Caco-2 (cell line): ENCODE measurements at regions of chr9 and their contacts with region 1.

Region 1: DNA sequence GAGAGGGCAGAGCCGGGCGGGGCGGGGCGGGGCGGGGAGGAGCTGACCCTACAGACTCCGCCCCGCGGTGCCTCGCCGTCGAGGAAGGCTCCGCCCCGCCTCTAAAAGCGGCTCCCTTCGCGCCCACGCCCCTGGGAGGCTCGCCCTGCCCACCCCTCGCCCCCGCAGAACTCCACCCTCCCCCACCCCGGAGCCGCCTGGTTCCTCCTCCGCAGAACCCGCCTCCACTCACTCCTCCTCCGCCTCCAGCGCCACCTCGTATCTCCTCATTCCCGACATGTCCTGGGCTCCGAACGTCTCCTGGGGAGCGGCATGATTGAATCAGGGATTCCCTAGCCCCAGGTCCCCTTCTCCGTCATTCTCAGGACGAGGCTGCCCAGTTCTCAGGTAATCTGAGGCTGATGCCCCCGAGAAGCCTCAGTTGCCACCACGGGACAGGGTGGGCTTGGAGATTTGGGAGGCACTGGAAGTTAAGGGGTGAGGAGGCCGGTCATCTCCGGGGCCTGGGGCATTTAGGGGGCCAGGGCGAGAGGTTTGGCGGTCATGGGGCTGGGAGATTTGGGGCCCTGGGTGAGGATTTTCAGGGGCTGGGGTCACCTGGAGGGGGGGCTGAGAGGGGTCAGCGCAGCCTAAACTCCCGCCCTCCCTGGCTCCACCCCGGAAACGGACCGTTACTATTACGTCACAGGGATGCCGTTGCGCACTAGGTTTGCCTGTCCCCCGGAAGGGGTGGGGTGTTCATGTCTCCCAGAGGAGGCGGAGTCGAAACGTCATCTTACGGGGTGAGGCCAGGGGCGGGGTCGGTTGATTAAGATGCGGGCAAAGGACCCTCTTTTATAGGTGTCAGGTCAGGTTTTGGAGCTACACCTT is 3.2 kb upstream of the CCL27 start:
- DNase-seq: peak; percentile 83 to 89
- H3K4me3 ChIP-seq: peak overlapping the region; percentile 57
- H3K4me3 Mint-ChIP-seq: peak overlapping the region; percentile 81
- H3K27ac Mint-ChIP-seq: peak overlapping the region; percentile 61
- H3K4me1 ChIP-seq: peaks cover 15% of the 10 kb centered on the region
- H3K4me1 Mint-ChIP-seq: peaks cover 28% of the 10 kb centered on the region
- H3K27me3 ChIP-seq: no peaks in the 10 kb centered on the region
- H3K27me3 Mint-ChIP-seq: no peaks in the 10 kb centered on the region
- CTCF ChIP-seq: no peak

Region 2: DNA sequence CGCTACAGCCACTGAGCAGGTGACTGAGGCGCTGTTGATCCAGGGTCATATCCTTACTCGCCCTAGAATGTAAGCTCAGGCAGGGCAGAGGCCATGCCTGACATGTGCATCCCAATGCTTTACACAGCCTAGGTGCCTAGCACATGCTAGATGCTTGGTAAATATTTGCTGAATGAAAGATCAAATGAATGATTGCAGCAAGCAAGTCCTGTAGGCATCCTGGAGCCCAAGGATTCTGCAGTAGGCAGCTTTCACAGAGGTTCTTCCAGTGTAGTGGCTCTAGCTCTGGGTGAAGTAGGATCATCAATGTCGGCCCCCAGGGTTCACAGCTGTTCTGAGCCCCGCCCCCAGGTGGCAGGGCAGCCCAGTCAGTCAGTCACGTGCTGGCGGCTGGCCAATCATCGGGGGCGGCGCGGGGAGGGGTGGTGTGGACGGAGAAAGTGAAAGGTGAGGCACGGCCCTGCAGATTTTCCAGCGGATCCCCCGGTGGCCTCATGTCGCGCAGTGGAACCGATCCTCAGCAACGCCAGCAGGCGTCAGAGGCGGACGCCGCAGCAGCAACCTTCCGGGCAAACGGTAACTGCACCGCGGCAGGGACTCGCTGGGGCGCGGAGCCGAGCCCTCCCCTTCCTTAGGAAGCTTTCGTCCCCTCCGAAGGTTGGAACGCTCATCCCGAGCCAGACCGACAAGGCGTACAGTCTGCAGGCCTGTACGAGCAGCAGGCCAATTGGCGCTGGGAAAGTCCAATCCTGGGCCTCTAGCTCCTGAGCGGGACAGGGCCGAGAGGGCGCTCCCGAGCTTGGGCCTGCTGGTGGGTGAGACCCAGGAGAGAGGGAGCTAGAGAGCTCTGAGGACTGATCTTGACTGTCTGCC is 19.2 kb before region 1 on chr9 and contains the start of gene GALT:
- CTCF ChIA-PET with region 1: interaction called, 6 read pairs
- POLR2A ChIA-PET with region 1: interaction called, 3 read pairs
- intact Hi-C with region 1: loop called (anchors 2 kb)
- DNase-seq: peak; percentile 97 to 98
- H3K4me3 ChIP-seq: peak within 1 kb of the TSS; percentile 77
- H3K4me3 Mint-ChIP-seq: peak within 1 kb of the TSS; percentile 81
- H3K27ac Mint-ChIP-seq: peak within 1 kb of the TSS; percentile 77
- H3K4me1 ChIP-seq: peaks cover 34% of the 10 kb centered on the region
- H3K4me1 Mint-ChIP-seq: peaks cover 25% of the 10 kb centered on the region
- H3K27me3 ChIP-seq: no peaks in the 10 kb centered on the region
- H3K27me3 Mint-ChIP-seq: no peaks in the 10 kb centered on the region
- CTCF ChIP-seq: peak; percentile 36 to 61
- total RNA-seq, gene GALT: 50.1 and 52.0 TPM in 2 replicates

Region 3: DNA sequence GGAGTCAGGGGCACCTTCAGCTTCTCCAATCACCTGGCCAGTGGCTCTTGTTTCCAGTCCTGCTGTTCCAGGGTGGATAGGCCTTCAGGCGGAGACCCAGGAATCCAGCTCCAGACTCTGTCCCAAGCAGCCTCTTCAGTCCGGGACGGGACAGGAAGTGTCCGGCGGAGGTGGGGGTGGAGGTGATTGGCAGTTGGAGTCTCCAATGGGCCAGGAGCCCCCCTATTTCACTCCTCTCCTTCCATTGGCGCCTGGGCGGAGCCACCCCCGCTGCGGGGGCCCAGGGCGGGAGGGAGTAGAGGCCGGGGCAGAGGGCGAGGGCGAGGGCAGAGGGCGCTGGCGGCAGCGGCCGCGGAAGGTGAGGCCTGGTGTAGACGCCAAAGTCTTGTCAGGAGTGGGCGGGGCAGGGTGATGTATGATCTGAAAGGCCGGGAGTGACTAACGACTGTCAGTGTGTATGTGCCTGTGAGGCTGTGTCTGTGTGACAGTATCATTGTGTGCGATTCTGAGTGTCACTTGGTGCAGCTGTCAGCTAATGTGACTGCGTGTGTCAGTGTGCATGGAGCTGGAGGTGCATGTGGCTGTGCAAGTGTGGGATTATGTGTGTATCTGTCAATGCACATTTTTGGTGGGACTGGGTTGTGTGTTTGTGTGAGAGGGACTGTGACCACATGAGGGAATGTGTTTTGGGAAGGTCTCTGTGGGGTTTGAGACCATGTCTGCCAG is 13.6 kb before region 1 on chr9 and contains the start of gene IL11RA:
- CTCF ChIA-PET with region 1: interaction called, 6 read pairs
- POLR2A ChIA-PET with region 1: interaction called, 3 read pairs
- intact Hi-C with region 1: loop called (anchors 1 kb)
- DNase-seq: peak; percentile 97 to 98
- H3K4me3 ChIP-seq: peak within 1 kb of the TSS; percentile 31
- H3K4me3 Mint-ChIP-seq: peak within 1 kb of the TSS; percentile 66
- H3K27ac Mint-ChIP-seq: peak within 1 kb of the TSS; percentile 62
- H3K4me1 ChIP-seq: peaks cover 30% of the 10 kb centered on the region
- H3K4me1 Mint-ChIP-seq: peaks cover 30% of the 10 kb centered on the region
- H3K27me3 ChIP-seq: no peaks in the 10 kb centered on the region
- H3K27me3 Mint-ChIP-seq: no peaks in the 10 kb centered on the region
- CTCF ChIP-seq: peak in 1 of 2 experiments; percentile 20
- total RNA-seq, gene IL11RA: 5.6 and 7.1 TPM in 2 replicates